ENCODE measurements at regions of chr1 and their contacts with region 1.

Region 1: DNA sequence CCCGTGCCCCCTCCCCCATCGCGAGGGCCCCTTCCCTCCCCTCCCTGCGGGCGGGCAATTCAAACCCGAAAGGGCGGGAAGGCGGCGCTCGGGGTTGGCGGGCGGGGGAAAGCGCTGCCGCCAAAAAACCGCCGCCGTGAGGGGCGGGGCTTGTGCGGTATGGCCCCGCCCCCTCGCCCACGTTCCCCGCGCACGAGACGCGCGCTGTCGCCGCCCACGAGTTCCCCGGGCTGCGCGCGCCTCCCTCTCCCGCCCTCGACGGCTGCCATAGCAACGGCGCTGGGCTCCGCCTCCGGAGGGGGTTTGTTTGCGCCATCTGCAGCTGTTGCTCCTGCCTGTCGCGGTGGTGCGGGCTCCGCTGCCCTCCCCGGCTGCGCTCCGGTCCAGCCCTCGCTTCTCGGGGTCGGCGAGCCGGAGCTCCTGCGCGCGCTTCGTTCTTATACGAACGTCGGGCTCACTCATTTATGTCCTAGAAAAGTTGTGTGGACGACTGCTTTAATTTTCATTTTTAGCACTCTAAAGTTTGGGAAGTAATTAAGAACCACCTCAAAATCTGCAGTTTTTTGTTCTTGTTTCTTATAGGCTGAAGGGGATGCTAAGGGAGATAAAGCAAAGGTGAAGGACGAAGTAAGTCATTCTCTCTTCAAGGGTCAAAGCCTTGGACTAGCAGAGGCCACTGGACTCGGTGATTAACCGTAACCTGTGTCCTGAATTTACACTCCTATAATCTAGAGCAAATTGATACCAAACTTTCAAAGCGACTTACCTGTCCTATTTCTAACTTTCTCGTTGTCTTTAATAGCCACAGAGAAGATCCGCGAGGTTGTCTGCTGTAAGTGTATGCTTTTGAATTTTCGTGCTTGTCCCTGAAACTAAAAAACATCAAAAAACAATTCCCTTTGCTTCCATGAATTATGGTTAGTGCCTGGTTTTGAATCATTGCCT is 933 bp downstream of the HMGN2 start:
- DNase-seq: peak; percentile 94 to 99 (median 98)
- ATAC-seq: peak; percentile 86
- H3K4me3 ChIP-seq: peak overlapping the region; percentile 48 to 72
- H3K4me3 Mint-ChIP-seq: peak overlapping the region; percentile 85
- H3K27ac ChIP-seq: peak overlapping the region; percentile 93 to 94
- H3K27ac Mint-ChIP-seq: peak overlapping the region; percentile 78
- H3K4me1 ChIP-seq: peaks cover 32% of the 10 kb centered on the region
- H3K4me1 Mint-ChIP-seq: peaks cover 51% of the 10 kb centered on the region
- H3K27me3 ChIP-seq: no peaks in the 10 kb centered on the region
- H3K27me3 Mint-ChIP-seq: no peaks in the 10 kb centered on the region
- CTCF ChIP-seq: no peak

Region 2: DNA sequence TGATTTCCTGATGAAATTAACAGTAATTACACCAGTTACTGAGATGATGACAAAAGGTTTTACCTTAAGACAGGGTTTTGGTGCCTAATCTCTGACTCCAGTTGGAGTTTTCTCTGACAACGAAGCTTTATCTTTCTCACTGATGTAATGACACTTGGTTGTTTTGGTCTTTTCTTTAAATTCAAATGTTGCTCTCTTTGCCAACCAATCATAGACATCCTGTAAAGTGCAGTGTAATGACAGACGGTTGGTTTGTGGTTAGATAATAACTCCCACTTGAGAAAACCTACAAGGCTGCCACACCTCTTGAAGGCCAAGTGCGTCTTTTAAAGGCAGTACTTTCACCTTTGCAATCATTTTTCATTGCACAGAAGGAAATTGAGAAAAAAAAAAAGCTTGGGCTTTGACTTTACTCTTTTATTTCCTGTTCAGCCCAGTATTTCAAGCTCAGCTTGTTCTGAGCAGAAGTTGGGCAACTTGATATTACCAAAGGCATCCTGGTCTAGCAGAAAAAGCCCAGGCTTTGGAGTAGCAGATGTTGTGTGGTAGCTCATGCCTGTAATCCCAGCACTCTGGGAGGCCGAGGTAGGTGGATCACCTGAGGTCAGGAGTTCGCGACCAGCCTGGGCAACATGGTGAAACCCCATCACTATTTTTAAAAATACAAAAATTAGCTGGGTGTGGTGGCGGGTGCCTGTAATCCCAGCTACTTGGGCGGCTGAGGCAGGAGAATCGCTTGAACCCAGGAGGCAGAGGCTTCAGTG is 346.7 kb before region 1 on chr1:
- CTCF ChIA-PET with region 1: no interaction called
- POLR2A ChIA-PET with region 1: no interaction called
- intact Hi-C with region 1: loop called in 1 of 2 experiments (anchors 5 kb)
- DNase-seq: peak; percentile 18 to 94 (median 58)
- ATAC-seq: peak; percentile 98
- H3K4me3 ChIP-seq: peak overlapping the region in 1 of 2 experiments; percentile 12
- H3K4me3 Mint-ChIP-seq: peak overlapping the region; percentile 54
- H3K27ac ChIP-seq: peak overlapping the region; percentile 16 to 21
- H3K27ac Mint-ChIP-seq: peak overlapping the region; percentile 88
- H3K4me1 ChIP-seq: peaks cover 26% of the 10 kb centered on the region
- H3K4me1 Mint-ChIP-seq: peaks cover 40% of the 10 kb centered on the region
- H3K27me3 ChIP-seq: peaks cover 0 to 7% of the 10 kb centered on the region in 2 experiments
- H3K27me3 Mint-ChIP-seq: no peaks in the 10 kb centered on the region
- CTCF ChIP-seq: no peak

Region 3: DNA sequence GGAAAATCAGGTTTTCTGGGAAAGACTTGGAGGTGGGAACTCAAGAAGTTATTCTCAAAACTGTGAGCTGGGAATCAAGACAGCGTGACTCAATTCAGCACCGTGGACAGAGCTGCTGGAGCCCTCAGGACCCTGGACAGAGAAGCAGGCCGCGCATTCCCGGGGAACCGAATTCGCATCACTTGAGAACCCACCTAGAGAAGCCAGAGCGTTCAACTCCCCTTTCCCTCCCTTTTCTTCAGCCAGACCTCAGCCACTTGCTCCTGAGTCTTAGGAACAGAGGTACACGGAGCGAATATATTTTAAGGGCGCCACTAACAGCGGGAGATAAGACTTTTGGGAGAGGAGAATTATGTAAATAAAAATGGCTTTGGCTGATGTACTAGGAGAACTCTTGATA is 64.6 kb before region 1 on chr1:
- CTCF ChIA-PET with region 1: no interaction called
- POLR2A ChIA-PET with region 1: no interaction called
- intact Hi-C with region 1: loop called in 1 of 2 experiments (anchors 1 kb)
- DNase-seq: peak; percentile 65 to 87 (median 81)
- ATAC-seq: peak; percentile 99
- H3K4me3 ChIP-seq: no peak overlapping the region
- H3K4me3 Mint-ChIP-seq: peak overlapping the region; percentile 62
- H3K27ac ChIP-seq: no peak overlapping the region
- H3K27ac Mint-ChIP-seq: no peak overlapping the region
- H3K4me1 ChIP-seq: peaks cover 17% of the 10 kb centered on the region
- H3K4me1 Mint-ChIP-seq: peaks cover 22% of the 10 kb centered on the region
- H3K27me3 ChIP-seq: peaks cover 26 to 42% of the 10 kb centered on the region in 2 experiments
- H3K27me3 Mint-ChIP-seq: peaks cover 54% of the 10 kb centered on the region
- CTCF ChIP-seq: no peak

Region 4: GRCh38 chr1:26431979-26432695 is 41.0 kb before region 1 on chr1 and contains the start of gene DHDDS:
- CTCF ChIA-PET with region 1: interaction called, 11 read pairs
- POLR2A ChIA-PET with region 1: interaction called, 21 read pairs
- intact Hi-C with region 1: loop called (anchors 1 kb)
- DNase-seq: peak; percentile 96 to 99 (median 99)
- ATAC-seq: peak; percentile 96
- H3K4me3 ChIP-seq: peak within 1 kb of the TSS; percentile 72 to 78
- H3K4me3 Mint-ChIP-seq: peak within 1 kb of the TSS; percentile 95
- H3K27ac ChIP-seq: peak within 1 kb of the TSS; percentile 73 to 81
- H3K27ac Mint-ChIP-seq: peak within 1 kb of the TSS; percentile 96
- H3K4me1 ChIP-seq: peaks cover 20% of the 10 kb centered on the region
- H3K4me1 Mint-ChIP-seq: peaks cover 21% of the 10 kb centered on the region
- H3K27me3 ChIP-seq: no peaks in the 10 kb centered on the region
- H3K27me3 Mint-ChIP-seq: no peaks in the 10 kb centered on the region
- CTCF ChIP-seq: no peak
- total RNA-seq, gene DHDDS: 23.9 to 29.2 TPM

Region 5: GRCh38 chr1:26874896-26875295 is 401.7 kb after region 1 on chr1:
- CTCF ChIA-PET with region 1: no interaction called
- POLR2A ChIA-PET with region 1: no interaction called
- intact Hi-C with region 1: no loop called
- DNase-seq: no peak
- ATAC-seq: no peak
- H3K4me3 ChIP-seq: no peak overlapping the region
- H3K4me3 Mint-ChIP-seq: no peak overlapping the region
- H3K27ac ChIP-seq: no peak overlapping the region
- H3K27ac Mint-ChIP-seq: no peak overlapping the region
- H3K4me1 ChIP-seq: no peaks in the 10 kb centered on the region
- H3K4me1 Mint-ChIP-seq: no peaks in the 10 kb centered on the region
- H3K27me3 ChIP-seq: no peaks in the 10 kb centered on the region
- H3K27me3 Mint-ChIP-seq: no peaks in the 10 kb centered on the region
- CTCF ChIP-seq: no peak

Region 6: GRCh38 chr1:26921540-26922430 is 448.6 kb after region 1 on chr1 and contains the start of gene NUDC:
- CTCF ChIA-PET with region 1: no interaction called
- POLR2A ChIA-PET with region 1: no interaction called
- intact Hi-C with region 1: loop called in 1 of 2 experiments (anchors 1 kb)
- DNase-seq: peak; percentile 91 to 98 (median 94)
- ATAC-seq: peak; percentile 92
- H3K4me3 ChIP-seq: peak within 1 kb of the TSS; percentile 84 to 95
- H3K4me3 Mint-ChIP-seq: peak within 1 kb of the TSS; percentile 95
- H3K27ac ChIP-seq: peak within 1 kb of the TSS; percentile 87 to 90
- H3K27ac Mint-ChIP-seq: peak within 1 kb of the TSS; percentile 99
- H3K4me1 ChIP-seq: peaks cover 23% of the 10 kb centered on the region
- H3K4me1 Mint-ChIP-seq: peaks cover 34% of the 10 kb centered on the region
- H3K27me3 ChIP-seq: no peaks in the 10 kb centered on the region
- H3K27me3 Mint-ChIP-seq: no peaks in the 10 kb centered on the region
- CTCF ChIP-seq: no peak
- total RNA-seq, gene NUDC: 51.9 to 55.0 TPM

Measured in CD8-positive, alpha-beta T cell (primary cell).